ENCODE measurements at regions of chr5 and their contacts with region 1.

Region 1: GRCh38 chr5:174311531-174312269 is 266.2 kb downstream of the NSG2 start:
- DNase-seq: peak; percentile 79
- H3K4me3 ChIP-seq: peak overlapping the region; percentile 76
- H3K27ac ChIP-seq: no peak overlapping the region
- H3K4me1 ChIP-seq: no peaks in the 10 kb centered on the region
- H3K27me3 ChIP-seq: peaks cover 20% of the 10 kb centered on the region

Region 2: DNA sequence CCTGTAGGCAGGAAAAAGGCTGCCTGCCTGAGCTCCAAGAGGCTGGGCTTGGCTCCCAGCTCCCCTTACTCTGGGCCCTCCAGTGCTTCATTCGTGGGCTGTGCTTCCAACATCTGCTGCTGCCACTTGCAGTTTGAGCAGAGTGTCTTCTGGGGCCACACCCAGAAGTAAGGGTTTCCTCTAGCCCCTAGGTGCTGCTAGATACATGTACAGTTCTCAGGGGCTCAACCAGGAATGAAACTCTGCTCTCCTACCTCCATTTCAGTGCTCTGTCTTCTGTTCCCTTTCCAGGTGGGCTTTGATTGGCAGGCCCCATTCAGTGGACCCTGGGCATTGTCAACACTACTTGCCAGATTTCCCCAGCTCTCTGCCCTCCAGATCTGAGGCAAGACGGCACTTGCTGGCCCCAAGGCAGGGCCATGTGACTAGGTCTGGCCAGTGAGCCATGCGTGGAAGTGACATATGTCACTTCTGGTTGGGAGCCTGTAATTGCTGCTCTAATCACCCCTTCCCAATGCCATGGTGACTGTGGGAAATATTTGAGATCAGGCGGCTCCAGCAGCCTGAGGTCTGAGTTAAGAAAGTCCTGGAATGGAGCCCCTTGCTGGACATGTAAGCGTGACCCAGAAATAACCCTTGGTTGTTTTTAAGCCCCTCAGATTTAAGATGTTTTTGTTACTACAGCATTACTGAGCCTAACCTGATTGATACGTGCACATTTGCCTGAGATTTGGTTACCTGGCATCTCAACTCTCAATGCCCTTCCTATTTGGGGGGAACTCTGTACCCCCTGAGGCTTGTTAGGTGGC is 685.8 kb before region 1 on chr5:
- in situ Hi-C with region 1: loop called (anchors 10 kb)
- DNase-seq: no peak
- H3K4me3 ChIP-seq: no peak overlapping the region
- H3K27ac ChIP-seq: no peak overlapping the region
- H3K4me1 ChIP-seq: peaks cover 9% of the 10 kb centered on the region
- H3K27me3 ChIP-seq: no peaks in the 10 kb centered on the region